ENCODE measurements at regions of chr9 and their contacts with region 1.

Region 1: DNA sequence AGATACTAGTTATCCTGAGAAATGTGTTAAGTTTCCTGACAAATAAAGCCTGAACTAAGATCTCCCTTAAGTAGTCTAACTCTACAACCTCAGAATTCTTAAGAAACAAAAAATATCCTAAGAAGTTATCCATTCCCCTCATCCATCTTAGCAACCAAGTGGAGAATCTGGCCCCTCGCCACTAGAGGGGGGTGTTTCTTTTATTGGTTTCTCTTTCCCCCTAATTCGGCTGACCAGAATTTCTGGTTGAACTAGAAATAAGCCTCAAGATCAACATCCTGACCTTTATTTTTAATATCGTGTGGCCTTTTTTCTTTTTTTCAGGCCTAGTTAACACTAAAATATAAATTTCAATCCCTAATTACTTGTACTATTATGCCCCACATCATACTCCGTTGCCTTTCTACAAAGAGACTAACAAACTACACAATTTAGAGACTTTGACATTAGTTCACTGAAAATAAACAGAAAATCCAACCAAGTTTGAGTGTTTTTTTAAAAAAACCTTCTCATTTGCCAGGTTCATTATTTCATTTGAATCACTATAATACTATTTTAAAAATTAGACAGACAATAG is 14.3 kb upstream of the NR4A3 start:
- DNase-seq: peak; percentile 72
- H3K4me3 ChIP-seq: no peak overlapping the region
- H3K27ac ChIP-seq: no peak overlapping the region
- H3K4me1 ChIP-seq: peaks cover 16% of the 10 kb centered on the region; the same call in 1 of the 2 replicates
- H3K27me3 ChIP-seq: no peaks in the 10 kb centered on the region

Region 2: GRCh38 chr9:99272836-99273235 is 534.5 kb before region 1 on chr9:
- in situ Hi-C with region 1: loop called (anchors 10 kb)
- DNase-seq: no peak
- H3K4me3 ChIP-seq: no peak overlapping the region
- H3K27ac ChIP-seq: no peak overlapping the region
- H3K4me1 ChIP-seq: peaks cover 8% of the 10 kb centered on the region
- H3K27me3 ChIP-seq: no peaks in the 10 kb centered on the region

Region 3: DNA sequence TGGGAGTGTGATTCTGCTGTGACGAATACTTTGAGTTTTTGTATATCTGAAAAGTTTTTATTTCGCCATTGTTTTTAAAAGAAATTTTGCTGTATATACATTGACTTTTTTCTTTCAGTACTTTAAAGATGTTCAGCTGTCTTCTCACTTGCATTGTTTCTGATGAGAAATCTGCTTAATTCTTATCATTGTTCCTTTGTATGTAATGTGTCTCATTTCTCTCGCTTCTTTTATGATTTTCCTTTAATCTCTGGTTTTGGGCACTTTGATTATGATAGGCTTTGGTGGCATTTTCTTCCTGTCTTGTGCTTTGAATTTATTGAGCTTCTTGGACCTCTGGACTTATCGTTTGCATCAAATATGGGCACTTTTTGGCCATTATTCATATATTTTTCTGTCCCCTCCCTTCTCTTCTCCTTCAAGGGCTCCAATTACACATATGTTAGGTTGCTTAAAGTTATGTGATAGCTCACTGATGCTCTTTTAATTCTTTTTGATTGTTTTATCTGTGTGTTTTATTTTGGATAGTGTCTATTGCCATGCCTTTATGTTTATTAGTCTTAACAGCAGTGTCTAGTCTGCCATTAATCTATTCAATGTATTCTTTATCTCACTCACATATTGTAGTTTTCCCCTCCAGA is 129.7 kb after region 1 on chr9:
- in situ Hi-C with region 1: no loop called
- DNase-seq: no peak
- H3K4me3 ChIP-seq: no peak overlapping the region
- H3K27ac ChIP-seq: no peak overlapping the region
- H3K4me1 ChIP-seq: no peaks in the 10 kb centered on the region
- H3K27me3 ChIP-seq: no peaks in the 10 kb centered on the region